ENCODE measurements at regions of chr4 and their contacts with region 1.

Region 1: DNA sequence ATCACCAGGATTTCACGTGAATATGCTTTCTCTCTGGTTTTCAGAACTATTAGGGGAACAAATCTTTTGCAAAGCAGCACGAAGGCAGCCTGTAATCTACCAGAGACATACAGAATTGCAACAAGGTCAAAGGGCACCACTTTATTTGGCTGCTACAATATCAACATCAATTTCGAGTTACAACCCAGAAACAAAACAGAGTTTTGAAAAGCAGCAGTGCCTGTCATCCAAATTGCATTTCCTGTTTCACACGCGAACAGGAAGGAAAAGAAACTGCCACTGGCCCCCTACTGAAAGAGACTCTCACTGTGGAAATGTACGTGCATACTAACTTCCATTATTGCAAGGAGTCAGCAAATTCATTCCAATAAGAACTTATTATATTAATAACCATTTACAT is 17.1 kb upstream of the C1QTNF7 start:
- DNase-seq: peak; percentile 54 to 74 (median 69)
- H3K4me3 ChIP-seq: peak overlapping the region in 2 of 3 experiments; percentile 36 to 60
- H3K4me3 Mint-ChIP-seq: peak overlapping the region in 1 of 2 donors; percentile 67
- H3K27ac ChIP-seq: peak overlapping the region; percentile 14 to 80
- H3K27ac Mint-ChIP-seq: peak overlapping the region; percentile 72 to 86 (median 79)
- H3K4me1 ChIP-seq: peaks cover 69 to 83% of the 10 kb centered on the region in 2 donors
- H3K4me1 Mint-ChIP-seq: peaks cover 73% of the 10 kb centered on the region
- H3K27me3 ChIP-seq: no peaks in the 10 kb centered on the region
- H3K27me3 Mint-ChIP-seq: peaks cover 0 to 2% (median 0%) of the 10 kb centered on the region in 3 donors
- CTCF ChIP-seq: no peak

Region 2: DNA sequence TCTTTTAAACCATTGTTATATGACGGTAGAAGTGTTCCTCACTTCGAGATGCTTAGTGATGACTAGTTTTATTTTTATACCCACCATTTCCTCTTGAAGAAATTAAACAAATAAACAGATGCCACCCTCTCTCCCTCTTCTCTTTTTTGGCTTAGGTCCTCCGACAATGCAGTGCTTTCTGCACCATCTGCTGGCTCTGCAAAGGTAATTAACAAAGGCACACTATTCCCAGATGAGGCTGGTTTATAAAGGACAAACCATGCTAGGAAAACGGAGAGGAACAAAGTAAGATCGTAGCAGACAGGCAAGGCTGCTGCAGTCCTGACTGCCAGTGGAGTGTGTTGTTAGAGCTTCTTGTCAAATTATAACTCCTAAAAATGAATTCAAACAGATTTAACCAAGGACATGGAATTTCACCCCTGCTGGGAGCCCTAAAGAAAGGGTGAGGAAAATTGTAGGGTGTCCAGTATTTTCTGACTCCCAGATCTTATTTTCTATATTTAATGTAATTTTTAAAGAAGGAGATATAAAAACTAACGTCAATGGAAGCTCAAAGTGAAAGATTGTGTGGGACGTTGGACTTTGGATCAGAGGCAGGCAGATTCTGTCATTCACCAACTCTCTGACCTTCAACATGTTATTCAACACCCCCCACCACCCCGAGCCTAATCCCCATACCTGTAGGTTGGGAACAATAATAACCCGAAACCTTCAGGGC is 266.3 kb before region 1 on chr4:
- intact Hi-C with region 1: no loop called
- DNase-seq: no peak
- H3K4me3 ChIP-seq: no peak overlapping the region
- H3K4me3 Mint-ChIP-seq: no peak overlapping the region
- H3K27ac ChIP-seq: no peak overlapping the region
- H3K27ac Mint-ChIP-seq: no peak overlapping the region
- H3K4me1 ChIP-seq: peaks cover 0 to 1% of the 10 kb centered on the region in 2 donors
- H3K4me1 Mint-ChIP-seq: peaks cover 1% of the 10 kb centered on the region
- H3K27me3 ChIP-seq: no peaks in the 10 kb centered on the region
- H3K27me3 Mint-ChIP-seq: peaks cover 0 to 3% (median 1%) of the 10 kb centered on the region in 3 donors
- CTCF ChIP-seq: no peak

Region 3: GRCh38 chr4:15215109-15215508 is 195.6 kb before region 1 on chr4:
- intact Hi-C with region 1: no loop called
- DNase-seq: no peak
- H3K4me3 ChIP-seq: no peak overlapping the region
- H3K4me3 Mint-ChIP-seq: no peak overlapping the region
- H3K27ac ChIP-seq: no peak overlapping the region
- H3K27ac Mint-ChIP-seq: no peak overlapping the region
- H3K4me1 ChIP-seq: no peaks in the 10 kb centered on the region
- H3K4me1 Mint-ChIP-seq: no peaks in the 10 kb centered on the region
- H3K27me3 ChIP-seq: no peaks in the 10 kb centered on the region
- H3K27me3 Mint-ChIP-seq: no peaks in the 10 kb centered on the region
- CTCF ChIP-seq: no peak

Region 4: GRCh38 chr4:15444872-15445547 is 34.3 kb after region 1 on chr4:
- intact Hi-C with region 1: loop called in 1 of 2 experiments (anchors 5 kb)
- DNase-seq: no peak
- H3K4me3 ChIP-seq: no peak overlapping the region
- H3K4me3 Mint-ChIP-seq: no peak overlapping the region
- H3K27ac ChIP-seq: no peak overlapping the region
- H3K27ac Mint-ChIP-seq: no peak overlapping the region
- H3K4me1 ChIP-seq: peaks cover 1 to 3% of the 10 kb centered on the region in 2 donors
- H3K4me1 Mint-ChIP-seq: peaks cover 12% of the 10 kb centered on the region
- H3K27me3 ChIP-seq: no peaks in the 10 kb centered on the region
- H3K27me3 Mint-ChIP-seq: no peaks in the 10 kb centered on the region
- CTCF ChIP-seq: no peak